Activated naive CD4-positive, alpha-beta T cell treated with anti-CD3 and anti-CD28 coated beads for 36 hours (primary cell): ENCODE measurements at regions of chr18 and their contacts with region 1.

Region 1: DNA sequence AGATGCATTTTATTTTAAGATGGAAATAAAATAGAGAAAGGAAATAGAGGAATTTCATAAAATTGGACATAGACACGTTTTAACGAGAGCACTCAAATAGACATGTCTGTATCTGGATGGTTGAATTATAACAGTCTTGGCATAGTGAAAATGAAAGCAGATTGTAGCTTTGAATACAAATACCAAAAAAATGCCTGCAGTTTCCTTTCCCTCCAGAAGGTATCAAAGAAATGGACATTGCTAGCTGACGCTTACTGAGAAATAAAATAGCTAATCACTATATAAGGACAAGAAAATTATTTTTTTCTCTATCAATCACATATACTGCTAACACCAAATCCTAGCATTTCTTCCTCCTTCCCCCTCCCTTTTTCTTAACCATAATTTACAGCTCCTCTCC is 11.4 kb upstream of the MAPRE2 start:
- DNase-seq: no peak
- H3K4me3 Mint-ChIP-seq: peak overlapping the region; percentile 70
- H3K27ac Mint-ChIP-seq: peak overlapping the region; percentile 92
- H3K4me1 Mint-ChIP-seq: peaks cover 61% of the 10 kb centered on the region
- H3K27me3 Mint-ChIP-seq: no peaks in the 10 kb centered on the region

Region 2: GRCh38 chr18:34971313-34971712 is 58.5 kb before region 1 on chr18:
- CTCF ChIA-PET with region 1: no interaction called
- intact Hi-C with region 1: no loop called
- DNase-seq: no peak
- H3K4me3 Mint-ChIP-seq: no peak overlapping the region
- H3K27ac Mint-ChIP-seq: no peak overlapping the region
- H3K4me1 Mint-ChIP-seq: peaks cover 2% of the 10 kb centered on the region
- H3K27me3 Mint-ChIP-seq: peaks cover 3% of the 10 kb centered on the region

Region 3: DNA sequence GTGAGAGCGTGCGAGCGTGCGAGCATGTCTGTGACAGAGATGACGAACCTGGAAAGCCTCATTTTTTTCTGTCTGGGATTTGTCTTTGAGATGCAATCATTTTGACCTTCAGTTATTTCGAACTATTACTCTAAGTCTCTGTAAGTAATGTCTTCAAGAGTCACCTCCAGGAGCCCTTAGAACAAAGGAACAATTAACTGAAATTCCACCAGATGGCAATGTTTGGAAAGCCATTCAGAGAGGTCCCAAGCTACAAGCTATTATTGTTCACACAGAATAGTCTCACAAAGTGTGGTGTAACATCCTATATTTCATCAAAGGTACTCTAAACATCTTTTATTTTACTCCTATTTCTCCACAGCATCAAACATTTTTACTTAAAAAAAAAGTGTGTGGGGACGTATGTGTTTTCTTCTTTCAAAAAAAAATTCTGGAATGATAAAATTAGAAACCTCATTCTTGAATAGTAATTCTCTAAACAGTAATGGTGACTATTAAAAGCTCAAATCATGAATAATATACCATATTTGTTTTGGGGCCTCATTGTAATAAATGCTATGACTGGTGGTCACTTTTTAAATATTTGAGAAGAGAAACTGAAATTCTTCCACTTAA is 23.7 kb before region 1 on chr18:
- CTCF ChIA-PET with region 1: interaction called, 16 read pairs
- intact Hi-C with region 1: no loop called
- DNase-seq: no peak
- H3K4me3 Mint-ChIP-seq: no peak overlapping the region
- H3K27ac Mint-ChIP-seq: no peak overlapping the region
- H3K4me1 Mint-ChIP-seq: no peaks in the 10 kb centered on the region
- H3K27me3 Mint-ChIP-seq: no peaks in the 10 kb centered on the region

Region 4: DNA sequence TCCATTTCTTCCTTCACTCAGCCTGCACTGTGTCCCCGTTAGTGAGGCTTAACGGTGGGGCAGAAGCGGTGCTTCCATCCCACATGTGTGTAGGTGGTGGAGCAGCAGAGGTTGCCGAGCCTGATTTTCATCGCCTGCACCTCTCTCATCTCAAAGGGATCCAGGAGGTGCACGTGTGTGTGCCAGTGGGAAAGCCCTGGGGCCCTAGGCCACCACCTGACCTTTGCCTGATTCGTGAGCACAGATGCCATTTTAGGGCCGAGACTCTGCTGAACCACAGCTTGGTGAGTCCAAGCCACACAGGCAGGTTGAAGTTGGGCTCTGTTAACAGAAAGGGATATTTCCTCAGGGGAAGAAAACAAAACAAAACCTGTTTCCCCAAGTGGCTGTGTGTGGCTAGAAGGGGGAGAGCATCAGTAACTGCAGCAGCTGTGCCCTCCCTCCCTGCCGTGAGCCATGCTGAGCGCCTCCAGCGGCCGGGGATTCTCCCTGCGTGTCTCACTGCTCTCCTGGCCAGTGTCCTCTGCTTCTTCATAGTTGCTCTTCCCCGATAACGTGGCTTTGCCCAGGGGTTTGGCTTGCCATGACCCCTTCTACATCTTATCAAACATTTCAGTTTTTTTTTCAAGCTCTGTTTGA is 92.9 kb after region 1 on chr18:
- CTCF ChIA-PET with region 1: interaction called, 3 read pairs
- intact Hi-C with region 1: loop called (anchors 2 kb)
- DNase-seq: peak; percentile 65
- H3K4me3 Mint-ChIP-seq: peak overlapping the region; percentile 27
- H3K27ac Mint-ChIP-seq: peak overlapping the region; percentile 47
- H3K4me1 Mint-ChIP-seq: peaks cover 36% of the 10 kb centered on the region
- H3K27me3 Mint-ChIP-seq: no peaks in the 10 kb centered on the region

Region 5: GRCh38 chr18:35240664-35241447 is 211.1 kb after region 1 on chr18 and contains the start of gene ZNF397:
- CTCF ChIA-PET with region 1: interaction called, 4 read pairs
- intact Hi-C with region 1: loop called (anchors 1 kb)
- DNase-seq: peak; percentile 98
- H3K4me3 Mint-ChIP-seq: peak within 1 kb of the TSS; percentile 94
- H3K27ac Mint-ChIP-seq: peak within 1 kb of the TSS; percentile 99
- H3K4me1 Mint-ChIP-seq: peaks cover 38% of the 10 kb centered on the region
- H3K27me3 Mint-ChIP-seq: no peaks in the 10 kb centered on the region
- total RNA-seq, gene ZNF397: 22.6 to 23.2 TPM

Region 6: GRCh38 chr18:35355140-35355618 is 325.4 kb after region 1 on chr18:
- CTCF ChIA-PET with region 1: interaction called, 3 read pairs
- intact Hi-C with region 1: loop called (anchors 1 kb)
- DNase-seq: peak; percentile 68
- H3K4me3 Mint-ChIP-seq: no peak overlapping the region
- H3K27ac Mint-ChIP-seq: no peak overlapping the region
- H3K4me1 Mint-ChIP-seq: peaks cover 5% of the 10 kb centered on the region
- H3K27me3 Mint-ChIP-seq: no peaks in the 10 kb centered on the region